B cell (primary cell): ENCODE measurements at regions of chr12 and their contacts with region 1.

Region 1: DNA sequence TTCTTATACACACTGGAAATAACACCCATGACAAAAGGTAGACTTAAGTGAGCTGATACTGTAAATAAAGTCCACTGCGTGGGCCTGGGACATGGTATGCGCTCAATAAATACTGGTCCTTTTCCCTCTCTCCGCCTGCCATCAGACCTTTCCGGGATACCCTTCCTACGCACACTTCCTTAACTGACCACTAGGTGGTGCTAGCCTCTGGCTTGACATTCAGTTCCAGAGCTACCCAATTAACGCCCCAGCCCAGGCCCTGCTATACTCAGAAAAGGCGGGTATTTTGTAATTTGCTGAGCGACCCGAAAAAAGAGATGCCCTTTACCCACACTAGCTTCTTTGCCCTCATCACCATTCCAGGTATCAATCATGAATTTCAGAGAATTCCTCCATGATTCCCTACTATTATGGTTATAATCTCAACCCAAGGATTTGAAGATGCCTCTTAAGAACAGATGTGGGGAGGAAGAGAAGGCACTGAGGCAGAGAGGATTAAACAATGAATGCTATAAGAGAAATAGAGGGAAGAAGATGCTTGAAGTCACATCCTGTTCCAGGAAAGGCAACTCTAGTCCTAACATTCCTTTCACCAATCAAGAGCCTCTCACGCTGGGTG is 3.9 kb upstream of the LRP1 start:
- DNase-seq: peak; percentile 84
- ATAC-seq: peak; percentile 67
- H3K4me3 ChIP-seq: no peak overlapping the region
- H3K4me3 Mint-ChIP-seq: peak overlapping the region; percentile 9
- H3K27ac ChIP-seq: no peak overlapping the region
- H3K27ac Mint-ChIP-seq: no peak overlapping the region
- H3K4me1 ChIP-seq: peaks cover 13 to 21% of the 10 kb centered on the region in 2 donors
- H3K4me1 Mint-ChIP-seq: peaks cover 7% of the 10 kb centered on the region
- H3K27me3 ChIP-seq: peaks cover 0 to 9% (median 1%) of the 10 kb centered on the region in 4 experiments
- H3K27me3 Mint-ChIP-seq: peaks cover 3% of the 10 kb centered on the region
- CTCF ChIP-seq: peak; percentile 96

Region 2: DNA sequence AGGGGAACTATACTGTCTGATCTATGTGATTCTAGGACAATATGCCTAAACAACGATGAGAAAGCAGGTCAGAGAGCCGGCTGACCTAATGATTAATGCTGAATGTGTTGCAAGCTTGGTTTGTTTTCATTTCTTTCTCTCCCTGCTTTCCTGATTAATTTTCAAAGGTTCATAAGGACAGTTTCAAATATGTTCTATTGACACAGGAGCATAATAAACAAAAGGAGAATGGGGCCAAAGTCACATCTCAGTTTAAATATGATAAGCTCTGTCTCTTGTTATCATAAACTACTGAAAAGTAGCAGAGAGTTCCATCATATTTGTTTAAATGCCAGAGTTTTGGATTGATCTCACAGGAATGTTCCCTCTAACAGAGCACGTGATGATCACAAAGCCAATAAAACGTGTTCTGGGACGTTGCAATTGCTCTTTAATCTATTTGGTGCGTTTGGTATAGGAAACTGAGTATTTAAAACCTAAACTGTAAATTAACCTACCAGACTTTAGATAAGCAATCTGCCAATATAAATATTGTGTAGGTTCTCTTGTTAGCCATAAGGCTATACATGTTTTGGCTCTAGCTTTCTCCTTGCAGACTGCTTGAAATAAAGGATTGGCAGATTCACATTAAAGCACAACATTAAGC is 365.0 kb before region 1 on chr12:
- CTCF ChIA-PET with region 1: no interaction called
- POLR2A ChIA-PET with region 1: no interaction called
- intact Hi-C with region 1: loop called (anchors 5 kb)
- DNase-seq: no peak
- ATAC-seq: no peak
- H3K4me3 ChIP-seq: no peak overlapping the region
- H3K4me3 Mint-ChIP-seq: no peak overlapping the region
- H3K27ac ChIP-seq: no peak overlapping the region
- H3K27ac Mint-ChIP-seq: no peak overlapping the region
- H3K4me1 ChIP-seq: no peaks in the 10 kb centered on the region
- H3K4me1 Mint-ChIP-seq: peaks cover 1% of the 10 kb centered on the region
- H3K27me3 ChIP-seq: no peaks in the 10 kb centered on the region
- H3K27me3 Mint-ChIP-seq: no peaks in the 10 kb centered on the region
- CTCF ChIP-seq: no peak

Region 3: GRCh38 chr12:57088459-57089248 is 35.7 kb before region 1 on chr12 and contains the start of gene NAB2:
- CTCF ChIA-PET with region 1: interaction called, 5 read pairs
- POLR2A ChIA-PET with region 1: interaction called, 8 read pairs
- intact Hi-C with region 1: loop called (anchors 1 kb)
- DNase-seq: peak; percentile 96
- ATAC-seq: peak; percentile 62
- H3K4me3 ChIP-seq: peak within 1 kb of the TSS; percentile 75 to 100 (median 80)
- H3K4me3 Mint-ChIP-seq: peak within 1 kb of the TSS; percentile 92
- H3K27ac ChIP-seq: peak within 1 kb of the TSS; percentile 98 to 99
- H3K27ac Mint-ChIP-seq: peak within 1 kb of the TSS; percentile 91
- H3K4me1 ChIP-seq: peaks cover 18 to 40% of the 10 kb centered on the region in 2 donors
- H3K4me1 Mint-ChIP-seq: peaks cover 55% of the 10 kb centered on the region
- H3K27me3 ChIP-seq: no peaks in the 10 kb centered on the region
- H3K27me3 Mint-ChIP-seq: no peaks in the 10 kb centered on the region
- CTCF ChIP-seq: no peak
- total RNA-seq, gene NAB2: 49.0 and 52.1 TPM in 2 replicates

Region 4: GRCh38 chr12:57175428-57176138 is 51.2 kb after region 1 on chr12:
- CTCF ChIA-PET with region 1: interaction called, 108 read pairs
- POLR2A ChIA-PET with region 1: no interaction called
- intact Hi-C with region 1: loop called (anchors 2 kb)
- DNase-seq: peak; percentile 36
- ATAC-seq: no peak
- H3K4me3 ChIP-seq: no peak overlapping the region
- H3K4me3 Mint-ChIP-seq: no peak overlapping the region
- H3K27ac ChIP-seq: no peak overlapping the region
- H3K27ac Mint-ChIP-seq: no peak overlapping the region
- H3K4me1 ChIP-seq: no peaks in the 10 kb centered on the region
- H3K4me1 Mint-ChIP-seq: no peaks in the 10 kb centered on the region
- H3K27me3 ChIP-seq: no peaks in the 10 kb centered on the region
- H3K27me3 Mint-ChIP-seq: peaks cover 5% of the 10 kb centered on the region
- CTCF ChIP-seq: peak; percentile 49

Region 5: GRCh38 chr12:57213058-57213715 is 88.8 kb after region 1 on chr12:
- CTCF ChIA-PET with region 1: interaction called, 13 read pairs
- POLR2A ChIA-PET with region 1: interaction called, 3 read pairs
- intact Hi-C with region 1: no loop called
- DNase-seq: peak; percentile 89
- ATAC-seq: peak; percentile 42
- H3K4me3 ChIP-seq: peak overlapping the region in 1 of 5 experiments; percentile 20
- H3K4me3 Mint-ChIP-seq: peak overlapping the region; percentile 54
- H3K27ac ChIP-seq: no peak overlapping the region
- H3K27ac Mint-ChIP-seq: peak overlapping the region; percentile 56
- H3K4me1 ChIP-seq: peaks cover 43 to 49% of the 10 kb centered on the region in 2 donors
- H3K4me1 Mint-ChIP-seq: peaks cover 43% of the 10 kb centered on the region
- H3K27me3 ChIP-seq: peaks cover 0 to 51% (median 17%) of the 10 kb centered on the region in 4 experiments
- H3K27me3 Mint-ChIP-seq: peaks cover 24% of the 10 kb centered on the region
- CTCF ChIP-seq: peak; percentile 93